Activated B cell treated with CpG ODN at 0.5 μM for 24 hours (primary cell): ENCODE measurements at regions of chr1 and their contacts with region 1.

Region 1: DNA sequence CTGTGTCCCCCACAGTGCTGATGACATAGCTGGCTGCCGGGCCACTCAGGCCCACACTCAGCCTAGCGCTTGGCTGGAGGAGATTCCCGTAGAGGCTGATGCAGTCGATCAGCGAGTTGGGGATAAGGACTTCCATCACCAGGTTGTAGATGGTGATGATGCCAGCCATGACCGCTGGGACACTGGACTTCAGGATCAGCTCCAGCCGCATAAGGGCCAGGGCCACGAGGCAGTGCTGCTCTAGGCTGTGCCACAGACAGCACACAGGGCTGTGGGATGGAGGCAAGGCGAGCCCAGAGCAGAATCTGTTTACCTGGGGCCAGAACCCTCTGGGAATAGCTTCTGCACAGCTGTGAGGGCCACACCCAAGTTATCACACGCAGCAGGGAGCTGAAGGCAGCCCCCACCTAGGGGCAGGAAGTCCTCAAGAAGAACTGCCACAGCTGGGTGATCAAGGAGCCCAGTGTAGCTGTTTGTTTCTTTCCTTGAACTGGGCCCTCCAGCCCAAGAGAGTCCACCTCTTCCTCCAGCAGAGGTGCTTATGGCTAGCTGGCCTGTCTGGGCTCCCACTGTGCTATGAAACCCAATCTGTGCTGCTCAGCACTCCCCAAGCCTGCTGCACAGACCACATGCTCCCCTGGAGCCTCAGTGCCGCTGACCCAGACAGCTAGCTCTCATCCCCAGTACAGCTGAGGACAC is 6.2 kb downstream of the SLC2A1 start:
- DNase-seq: peak; percentile 51
- ATAC-seq: peak; percentile 76
- H3K4me3 Mint-ChIP-seq: peak overlapping the region; percentile 70
- H3K27ac Mint-ChIP-seq: peak overlapping the region; percentile 96
- H3K4me1 Mint-ChIP-seq: peaks cover 96% of the 10 kb centered on the region
- H3K27me3 Mint-ChIP-seq: no peaks in the 10 kb centered on the region
- CTCF ChIP-seq: no peak

Region 2: GRCh38 chr1:42774928-42775526 is 177.4 kb before region 1 on chr1:
- CTCF ChIA-PET with region 1: no interaction called
- POLR2A ChIA-PET with region 1: no interaction called
- intact Hi-C with region 1: no loop called
- DNase-seq: no peak
- ATAC-seq: no peak
- H3K4me3 Mint-ChIP-seq: no peak overlapping the region
- H3K27ac Mint-ChIP-seq: no peak overlapping the region
- H3K4me1 Mint-ChIP-seq: peaks cover 13% of the 10 kb centered on the region
- H3K27me3 Mint-ChIP-seq: no peaks in the 10 kb centered on the region
- CTCF ChIP-seq: no peak

Region 3: DNA sequence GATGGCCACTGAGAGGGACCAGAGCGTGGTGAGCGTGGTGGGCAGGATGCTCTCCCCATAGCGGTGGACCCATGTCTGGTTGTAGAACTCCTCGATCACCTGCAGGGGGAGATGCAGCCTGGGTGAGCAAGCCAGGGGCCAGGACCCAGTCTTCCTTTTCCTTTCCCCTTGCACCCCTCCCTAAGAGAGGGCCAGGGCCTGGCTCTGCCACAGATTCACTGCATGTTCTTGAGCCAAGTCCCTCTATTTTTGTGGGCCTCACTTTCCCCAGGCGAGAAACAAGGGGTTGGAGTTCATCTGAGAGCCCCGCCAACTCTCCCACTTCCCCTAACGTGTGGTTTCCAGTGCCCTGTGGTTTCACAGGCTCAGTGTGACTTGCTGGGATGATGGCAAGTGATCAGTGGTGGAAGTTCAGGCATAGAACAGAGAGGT is 21.3 kb before region 1 on chr1:
- CTCF ChIA-PET with region 1: interaction called, 10 read pairs
- POLR2A ChIA-PET with region 1: interaction called, 694 read pairs
- intact Hi-C with region 1: loop called (anchors 1 kb)
- DNase-seq: peak; percentile 47
- ATAC-seq: peak; percentile 16
- H3K4me3 Mint-ChIP-seq: peak overlapping the region; percentile 69
- H3K27ac Mint-ChIP-seq: peak overlapping the region; percentile 91
- H3K4me1 Mint-ChIP-seq: peaks cover 75% of the 10 kb centered on the region
- H3K27me3 Mint-ChIP-seq: no peaks in the 10 kb centered on the region
- CTCF ChIP-seq: no peak

Region 4: GRCh38 chr1:42936309-42937078 is 16.0 kb before region 1 on chr1:
- CTCF ChIA-PET with region 1: interaction called, 10 read pairs
- POLR2A ChIA-PET with region 1: interaction called, 694 read pairs
- intact Hi-C with region 1: loop called (anchors 1 kb)
- DNase-seq: peak; percentile 19
- ATAC-seq: no peak
- H3K4me3 Mint-ChIP-seq: peak overlapping the region; percentile 67
- H3K27ac Mint-ChIP-seq: peak overlapping the region; percentile 91
- H3K4me1 Mint-ChIP-seq: peaks cover 100% of the 10 kb centered on the region
- H3K27me3 Mint-ChIP-seq: no peaks in the 10 kb centered on the region
- CTCF ChIP-seq: no peak

Region 5: DNA sequence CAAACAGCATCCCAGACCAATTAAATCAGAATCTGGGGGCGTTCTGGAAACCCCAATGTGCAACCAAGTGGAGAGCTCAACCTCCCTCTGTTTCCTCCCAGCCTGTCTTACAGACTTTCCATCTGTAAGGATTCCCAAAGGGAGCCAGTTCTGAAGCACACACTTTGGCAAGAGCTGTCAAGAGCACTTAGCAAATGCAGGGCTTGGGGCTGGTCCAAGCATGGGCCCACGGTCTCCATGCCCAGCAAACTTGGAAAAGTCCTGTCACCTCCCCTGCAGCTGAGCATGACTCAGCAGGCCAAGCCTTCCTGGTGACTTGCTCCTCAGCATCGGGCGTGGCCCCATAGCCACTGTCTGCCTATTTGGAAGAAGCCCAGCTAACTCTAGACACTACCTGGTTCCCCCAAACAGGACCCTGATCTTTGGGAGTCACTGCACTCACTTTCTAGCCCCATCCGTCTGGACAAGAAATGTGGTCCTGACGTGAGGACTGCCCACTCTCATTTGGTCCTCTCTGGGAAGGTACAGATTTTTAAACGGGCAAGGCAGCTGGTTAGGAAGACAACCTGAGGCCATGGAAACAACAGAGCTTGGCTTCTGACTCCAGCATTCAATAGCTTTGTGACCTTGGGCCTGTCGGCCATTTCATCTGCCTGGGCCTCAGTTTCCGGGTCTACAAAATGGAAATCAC is 10.7 kb before region 1 on chr1:
- CTCF ChIA-PET with region 1: interaction called, 9 read pairs
- POLR2A ChIA-PET with region 1: interaction called, 694 read pairs
- intact Hi-C with region 1: loop called (anchors 1 kb)
- DNase-seq: no peak
- ATAC-seq: no peak
- H3K4me3 Mint-ChIP-seq: no peak overlapping the region
- H3K27ac Mint-ChIP-seq: peak overlapping the region; percentile 91
- H3K4me1 Mint-ChIP-seq: peaks cover 100% of the 10 kb centered on the region
- H3K27me3 Mint-ChIP-seq: no peaks in the 10 kb centered on the region
- CTCF ChIP-seq: no peak